Transverse colon (tissue), 4 donors: ENCODE measurements at regions of chr16 and their contacts with region 1.

Region 1: DNA sequence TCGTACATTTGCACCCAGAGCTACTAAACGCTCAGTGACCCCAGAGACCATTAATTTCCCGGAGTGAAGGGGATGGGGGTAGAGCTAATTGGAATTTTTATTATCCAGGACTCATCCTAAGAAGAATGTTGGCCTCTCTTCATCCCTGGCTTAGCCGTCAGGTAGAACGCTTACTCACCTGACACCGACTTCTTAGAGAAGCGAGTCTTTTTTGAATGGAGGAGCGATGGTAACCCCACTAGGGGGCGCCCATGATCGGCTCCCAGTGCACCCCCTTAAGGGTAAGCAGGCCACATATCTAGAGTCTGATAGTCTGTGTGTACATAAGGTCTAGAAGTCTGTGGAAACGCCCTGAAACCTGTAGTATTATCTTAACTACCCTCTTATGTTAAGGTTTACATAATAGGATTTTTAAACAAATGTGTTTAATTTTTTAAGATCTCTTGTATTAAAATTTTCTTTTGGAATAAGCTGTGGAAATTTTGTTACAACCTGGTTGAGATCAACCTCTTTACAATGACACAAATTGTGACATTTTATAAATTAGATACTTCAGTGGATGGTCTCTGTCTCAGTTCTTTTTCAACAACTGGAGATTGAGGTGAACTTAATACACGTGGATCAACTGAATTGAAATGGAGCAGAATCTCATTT is 229.8 kb downstream of the CPPED1 start:
- DNase-seq: peak; percentile 51
- H3K4me3 ChIP-seq: no peak overlapping the region
- H3K27ac ChIP-seq: no peak overlapping the region
- H3K4me1 ChIP-seq: no peaks in the 10 kb centered on the region
- H3K27me3 ChIP-seq: no peaks in the 10 kb centered on the region
- CTCF ChIP-seq: peak; percentile 20 to 55 (median 37)
- EP300 ChIP-seq: no peak
- POLR2A ChIP-seq: no peak

Region 2: GRCh38 chr16:12646490-12647274 is 72.8 kb after region 1 on chr16:
- in situ Hi-C with region 1: no loop called
- intact Hi-C with region 1: loop called (anchors 2 kb)
- DNase-seq: no peak
- H3K4me3 ChIP-seq: no peak overlapping the region
- H3K27ac ChIP-seq: no peak overlapping the region
- H3K4me1 ChIP-seq: no peaks in the 10 kb centered on the region
- H3K27me3 ChIP-seq: no peaks in the 10 kb centered on the region
- CTCF ChIP-seq: no peak
- EP300 ChIP-seq: no peak
- POLR2A ChIP-seq: no peak

Region 3: DNA sequence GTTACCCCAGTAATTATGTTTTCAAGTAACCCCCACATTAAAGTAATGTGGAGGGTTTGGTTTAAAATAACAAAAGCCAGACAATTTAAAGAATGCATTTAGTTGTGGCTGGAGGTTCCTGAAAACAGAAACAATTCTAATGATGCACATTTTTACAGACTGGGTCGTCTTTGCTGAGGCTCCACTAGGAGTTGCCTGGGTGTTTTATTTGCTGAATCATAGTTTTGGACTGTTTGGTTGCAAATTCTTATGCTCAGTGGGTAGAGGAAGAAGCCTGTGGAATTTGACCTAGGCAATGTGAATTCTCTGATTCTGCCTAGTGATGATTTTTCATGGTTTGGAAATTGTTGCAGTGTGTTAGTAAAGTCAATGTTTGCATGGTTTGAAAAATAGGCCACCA is 343.8 kb after region 1 on chr16:
- in situ Hi-C with region 1: no loop called
- intact Hi-C with region 1: no loop called
- DNase-seq: no peak
- H3K4me3 ChIP-seq: no peak overlapping the region
- H3K27ac ChIP-seq: no peak overlapping the region
- H3K4me1 ChIP-seq: no peaks in the 10 kb centered on the region
- H3K27me3 ChIP-seq: no peaks in the 10 kb centered on the region
- CTCF ChIP-seq: no peak
- EP300 ChIP-seq: no peak
- POLR2A ChIP-seq: no peak